ENCODE measurements at regions of chr12 and their contacts with region 1.

Region 1: GRCh38 chr12:71157601-71158233 is at the start of gene TSPAN8:
- DNase-seq: peak; percentile 39 to 60
- H3K4me3 ChIP-seq: peak within 1 kb of the TSS; percentile 31
- H3K4me3 Mint-ChIP-seq: peak within 1 kb of the TSS; percentile 78
- H3K27ac Mint-ChIP-seq: peak within 1 kb of the TSS; percentile 72
- H3K4me1 ChIP-seq: peaks cover 54% of the 10 kb centered on the region
- H3K4me1 Mint-ChIP-seq: peaks cover 39% of the 10 kb centered on the region
- H3K27me3 ChIP-seq: no peaks in the 10 kb centered on the region
- H3K27me3 Mint-ChIP-seq: no peaks in the 10 kb centered on the region
- CTCF ChIP-seq: no peak
- total RNA-seq, gene TSPAN8: 86.4 and 99.9 TPM in 2 replicates

Region 2: DNA sequence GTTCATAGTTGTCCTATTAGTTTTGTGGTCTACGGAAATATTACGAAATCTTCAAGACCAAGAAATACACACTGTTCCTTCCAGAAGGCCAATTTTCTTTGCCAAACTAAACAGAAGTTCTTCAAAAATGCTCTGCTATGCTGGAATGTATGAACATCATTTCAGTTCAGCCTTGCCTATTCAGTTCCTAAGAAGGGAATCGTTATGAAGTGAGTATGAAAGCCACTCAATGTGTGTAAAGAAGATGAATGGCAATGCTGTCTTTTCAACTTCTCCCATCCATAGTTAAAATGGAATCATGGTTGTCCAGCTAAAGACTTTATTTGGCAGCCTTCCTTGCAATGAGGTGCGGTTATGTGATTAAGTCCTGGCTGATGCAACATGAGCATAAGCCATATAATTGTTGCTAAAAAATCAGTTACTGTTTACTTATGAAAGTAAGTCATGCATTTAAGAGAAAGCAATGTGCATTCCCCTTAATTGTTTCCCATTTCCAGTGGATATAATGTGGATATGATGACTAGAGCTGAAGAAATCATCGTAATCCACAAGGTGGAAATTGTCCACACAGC is 163.4 kb before region 1 on chr12:
- CTCF ChIA-PET with region 1: no interaction called
- POLR2A ChIA-PET with region 1: no interaction called
- intact Hi-C with region 1: no loop called
- DNase-seq: no peak
- H3K4me3 ChIP-seq: no peak overlapping the region
- H3K4me3 Mint-ChIP-seq: no peak overlapping the region
- H3K27ac Mint-ChIP-seq: no peak overlapping the region
- H3K4me1 ChIP-seq: no peaks in the 10 kb centered on the region
- H3K4me1 Mint-ChIP-seq: no peaks in the 10 kb centered on the region
- H3K27me3 ChIP-seq: no peaks in the 10 kb centered on the region
- H3K27me3 Mint-ChIP-seq: no peaks in the 10 kb centered on the region
- CTCF ChIP-seq: no peak

Region 3: GRCh38 chr12:71107936-71108335 is 49.8 kb before region 1 on chr12:
- CTCF ChIA-PET with region 1: no interaction called
- POLR2A ChIA-PET with region 1: no interaction called
- intact Hi-C with region 1: no loop called
- DNase-seq: no peak
- H3K4me3 ChIP-seq: no peak overlapping the region
- H3K4me3 Mint-ChIP-seq: no peak overlapping the region
- H3K27ac Mint-ChIP-seq: no peak overlapping the region
- H3K4me1 ChIP-seq: no peaks in the 10 kb centered on the region
- H3K4me1 Mint-ChIP-seq: no peaks in the 10 kb centered on the region
- H3K27me3 ChIP-seq: no peaks in the 10 kb centered on the region
- H3K27me3 Mint-ChIP-seq: no peaks in the 10 kb centered on the region
- CTCF ChIP-seq: no peak

Region 4: GRCh38 chr12:71138011-71138410 is 19.7 kb before region 1 on chr12:
- CTCF ChIA-PET with region 1: no interaction called
- POLR2A ChIA-PET with region 1: no interaction called
- intact Hi-C with region 1: loop called (anchors 2 kb)
- DNase-seq: no peak
- H3K4me3 ChIP-seq: no peak overlapping the region
- H3K4me3 Mint-ChIP-seq: no peak overlapping the region
- H3K27ac Mint-ChIP-seq: no peak overlapping the region
- H3K4me1 ChIP-seq: peaks cover 23% of the 10 kb centered on the region
- H3K4me1 Mint-ChIP-seq: peaks cover 27% of the 10 kb centered on the region
- H3K27me3 ChIP-seq: no peaks in the 10 kb centered on the region
- H3K27me3 Mint-ChIP-seq: no peaks in the 10 kb centered on the region
- CTCF ChIP-seq: no peak

Region 5: DNA sequence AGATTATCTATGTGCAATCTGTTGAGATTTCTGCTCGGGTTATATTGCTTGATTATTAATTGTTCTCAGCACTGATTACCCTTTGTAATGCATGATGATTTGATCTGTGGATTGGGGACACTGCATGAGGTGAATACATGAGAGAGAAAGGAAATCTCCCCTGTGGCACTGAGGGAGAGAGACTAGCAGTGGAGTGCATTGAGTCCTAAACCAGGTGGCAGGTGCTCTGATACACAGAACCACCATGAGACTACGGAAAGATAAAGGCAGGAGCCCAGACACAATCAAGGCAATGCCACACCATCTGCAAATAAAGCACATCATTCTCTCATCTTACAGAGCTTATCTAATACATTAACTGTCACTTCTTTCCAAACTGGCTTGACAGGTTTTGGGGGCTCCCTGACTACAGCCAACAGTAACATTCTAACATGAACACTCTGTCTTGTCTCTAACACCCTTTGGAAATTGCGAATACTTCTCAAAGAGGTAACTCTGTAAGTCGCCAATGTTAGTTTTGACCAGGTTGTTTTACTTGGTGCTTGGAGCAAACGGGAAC is 37.7 kb after region 1 on chr12:
- CTCF ChIA-PET with region 1: no interaction called
- POLR2A ChIA-PET with region 1: no interaction called
- intact Hi-C with region 1: loop called (anchors 1 kb)
- DNase-seq: peak; percentile 55
- H3K4me3 ChIP-seq: no peak overlapping the region
- H3K4me3 Mint-ChIP-seq: peak overlapping the region; percentile 32
- H3K27ac Mint-ChIP-seq: peak overlapping the region; percentile 85
- H3K4me1 ChIP-seq: peaks cover 28% of the 10 kb centered on the region
- H3K4me1 Mint-ChIP-seq: peaks cover 10% of the 10 kb centered on the region
- H3K27me3 ChIP-seq: no peaks in the 10 kb centered on the region
- H3K27me3 Mint-ChIP-seq: no peaks in the 10 kb centered on the region
- CTCF ChIP-seq: no peak

Measured in Caco-2 (cell line).